Ovary (tissue), 10 donors: ENCODE measurements at regions of chr13 and their contacts with region 1.

Region 1: GRCh38 chr13:44969551-44970484 is 19.5 kb downstream of the NUFIP1 start:
- DNase-seq: peak in 1 of 5 donors; percentile 34
- H3K4me3 ChIP-seq: no peak overlapping the region
- H3K27ac ChIP-seq: no peak overlapping the region
- H3K4me1 ChIP-seq: no peaks in the 10 kb centered on the region
- H3K27me3 ChIP-seq: no peaks in the 10 kb centered on the region
- CTCF ChIP-seq: peak; percentile 44 to 82 (median 66)
- EP300 ChIP-seq: no peak
- POLR2A ChIP-seq: no peak

Region 2: GRCh38 chr13:43905435-43906031 is 1064.3 kb before region 1 on chr13:
- intact Hi-C with region 1: loop called in 2 of 4 experiments (anchors 10 kb)
- DNase-seq: peak in 1 of 5 donors; percentile 44
- H3K4me3 ChIP-seq: no peak overlapping the region
- H3K27ac ChIP-seq: no peak overlapping the region
- H3K4me1 ChIP-seq: no peaks in the 10 kb centered on the region
- H3K27me3 ChIP-seq: no peaks in the 10 kb centered on the region
- CTCF ChIP-seq: peak in 2 of 3 donors; percentile 74 to 85
- EP300 ChIP-seq: no peak
- POLR2A ChIP-seq: no peak

Region 3: DNA sequence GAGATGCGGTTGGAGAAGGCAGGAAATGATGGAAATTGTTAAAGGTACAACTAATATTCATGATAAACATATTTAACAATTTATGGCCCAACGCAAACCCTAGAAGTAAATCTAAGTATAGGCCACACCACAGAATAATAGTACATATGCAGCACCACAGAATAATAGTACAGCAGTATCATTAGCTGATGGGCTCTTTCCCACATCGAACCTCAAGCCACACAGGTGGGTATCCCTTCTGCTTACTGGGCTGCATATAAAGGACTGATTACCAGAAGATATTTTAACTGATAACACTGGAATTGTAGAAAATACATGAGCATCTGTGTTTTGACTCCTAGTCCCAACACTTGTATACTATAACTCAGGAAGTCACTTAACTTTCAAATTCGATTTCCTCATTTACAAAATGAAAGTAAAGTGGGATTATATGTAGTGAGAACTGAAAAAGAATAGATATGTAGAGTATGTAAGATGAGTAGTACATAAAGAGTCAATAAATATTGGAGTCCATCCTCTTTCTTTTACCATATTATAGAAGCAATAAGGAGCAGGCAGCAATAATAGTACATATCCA is 485.2 kb before region 1 on chr13:
- intact Hi-C with region 1: loop called (anchors 5 kb)
- DNase-seq: no peak
- H3K4me3 ChIP-seq: no peak overlapping the region
- H3K27ac ChIP-seq: no peak overlapping the region
- H3K4me1 ChIP-seq: no peaks in the 10 kb centered on the region
- H3K27me3 ChIP-seq: no peaks in the 10 kb centered on the region
- CTCF ChIP-seq: no peak
- EP300 ChIP-seq: no peak
- POLR2A ChIP-seq: no peak

Region 4: DNA sequence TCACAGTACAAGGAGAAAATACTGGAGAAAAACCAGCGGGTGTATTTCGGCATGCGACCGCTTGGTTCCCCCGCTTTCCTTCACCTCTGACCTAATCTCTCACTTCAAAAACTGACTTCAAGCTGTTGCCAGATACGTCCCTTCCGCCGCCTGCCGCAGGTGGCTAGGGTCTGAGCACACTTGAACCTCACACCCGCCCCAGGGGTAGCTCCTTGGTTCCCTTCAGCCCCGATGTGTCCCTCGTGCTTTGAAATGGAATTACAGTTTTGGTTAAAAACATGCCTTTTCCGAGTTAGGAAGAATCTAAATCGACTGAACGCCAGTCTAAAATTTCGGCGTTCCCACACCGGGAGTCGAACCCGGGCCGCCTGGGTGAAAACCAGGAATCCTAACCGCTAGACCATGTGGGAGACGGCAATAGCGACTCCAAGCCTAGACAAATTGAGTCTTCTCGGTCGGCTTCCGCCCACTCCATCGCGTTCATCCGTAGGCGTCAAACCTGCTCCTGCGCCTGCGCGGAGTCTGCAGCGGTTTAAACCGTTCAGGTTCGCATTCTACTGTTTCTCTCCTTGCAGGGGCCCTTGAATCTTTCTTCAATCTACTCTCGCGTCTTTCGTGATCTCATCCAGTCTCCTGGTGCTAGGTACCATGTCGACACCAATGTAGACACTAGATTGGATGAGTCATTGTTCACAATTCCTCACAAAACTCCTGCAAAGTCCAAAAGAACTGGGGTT is 52.1 kb before region 1 on chr13:
- intact Hi-C with region 1: loop called in 1 of 4 experiments (anchors 5 kb)
- DNase-seq: peak; percentile 97 to 99 (median 98)
- H3K4me3 ChIP-seq: peak overlapping the region; percentile 51
- H3K27ac ChIP-seq: peak overlapping the region; percentile 91 to 95
- H3K4me1 ChIP-seq: peaks cover 8% of the 10 kb centered on the region
- H3K27me3 ChIP-seq: no peaks in the 10 kb centered on the region
- CTCF ChIP-seq: peak; percentile 61 to 93 (median 84)
- EP300 ChIP-seq: no peak
- POLR2A ChIP-seq: peak; percentile 67

Region 5: DNA sequence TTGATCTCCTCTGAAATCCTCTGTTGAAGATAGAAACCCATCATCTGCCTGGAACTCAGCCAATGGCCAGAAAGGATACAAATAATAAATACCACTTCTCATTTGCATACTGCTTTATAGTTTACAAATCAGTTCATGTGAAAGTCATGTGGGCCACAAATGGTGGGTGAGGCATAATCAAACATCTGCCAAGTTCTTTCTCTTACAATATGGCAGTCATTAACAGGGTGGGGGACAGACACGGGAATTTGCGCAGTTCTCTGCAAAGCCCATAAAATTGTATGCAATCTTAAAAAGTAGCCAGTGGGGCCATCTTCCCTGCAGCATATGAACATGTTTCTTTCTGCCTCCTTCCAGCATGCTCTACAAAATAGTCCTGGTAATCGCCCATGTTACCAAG is 40.1 kb before region 1 on chr13:
- intact Hi-C with region 1: loop called in 1 of 4 experiments (anchors 5 kb)
- DNase-seq: no peak
- H3K4me3 ChIP-seq: no peak overlapping the region
- H3K27ac ChIP-seq: no peak overlapping the region
- H3K4me1 ChIP-seq: peaks cover 4% of the 10 kb centered on the region
- H3K27me3 ChIP-seq: no peaks in the 10 kb centered on the region
- CTCF ChIP-seq: no peak
- EP300 ChIP-seq: no peak
- POLR2A ChIP-seq: no peak